ENCODE measurements at regions of chr6 and their contacts with region 1.

Region 1: DNA sequence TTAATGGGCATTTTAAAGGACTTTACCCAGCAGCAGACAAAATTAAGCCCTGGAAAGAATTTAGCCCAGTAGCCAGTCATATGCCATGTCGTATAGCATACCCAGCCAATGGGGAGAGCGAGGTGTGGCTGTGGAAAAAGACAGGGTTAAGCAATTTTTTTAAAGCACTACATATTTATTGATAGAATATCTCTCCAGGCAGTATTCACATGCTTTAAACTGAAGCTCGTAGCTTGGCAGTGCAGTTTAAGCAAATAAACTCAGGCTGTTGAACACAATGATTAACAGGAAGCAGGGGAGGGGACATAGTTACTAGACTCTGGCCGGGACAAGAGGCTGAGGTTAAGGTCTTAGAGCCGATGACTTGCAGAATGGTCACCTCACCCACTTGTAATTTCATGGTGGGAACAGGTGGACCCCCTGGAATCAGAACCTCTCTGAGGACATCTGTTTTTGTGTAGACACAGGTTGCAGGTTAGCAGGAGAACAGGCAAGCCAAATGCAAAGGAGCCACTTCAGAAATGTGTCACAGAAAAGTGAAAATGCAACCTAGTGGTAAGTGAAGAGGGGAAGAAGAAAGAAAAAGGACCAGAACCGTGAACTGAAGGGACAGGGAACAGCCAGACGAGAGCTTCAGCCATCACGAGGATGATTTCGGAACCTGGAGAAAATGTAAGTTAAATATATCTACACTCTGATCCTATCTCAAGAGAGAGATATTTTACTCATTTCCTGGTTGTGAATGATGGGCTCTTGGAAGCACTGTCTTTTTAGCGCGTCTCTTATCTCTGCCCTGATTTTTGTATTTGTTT is 7.2 kb downstream of the GCNT2 start:
- DNase-seq: no peak
- ATAC-seq: peak; percentile 57
- H3K4me3 Mint-ChIP-seq: peak overlapping the region; percentile 97
- H3K27ac Mint-ChIP-seq: peak overlapping the region; percentile 96
- H3K4me1 Mint-ChIP-seq: peaks cover 65% of the 10 kb centered on the region
- H3K27me3 Mint-ChIP-seq: no peaks in the 10 kb centered on the region
- CTCF ChIP-seq: no peak

Region 2: DNA sequence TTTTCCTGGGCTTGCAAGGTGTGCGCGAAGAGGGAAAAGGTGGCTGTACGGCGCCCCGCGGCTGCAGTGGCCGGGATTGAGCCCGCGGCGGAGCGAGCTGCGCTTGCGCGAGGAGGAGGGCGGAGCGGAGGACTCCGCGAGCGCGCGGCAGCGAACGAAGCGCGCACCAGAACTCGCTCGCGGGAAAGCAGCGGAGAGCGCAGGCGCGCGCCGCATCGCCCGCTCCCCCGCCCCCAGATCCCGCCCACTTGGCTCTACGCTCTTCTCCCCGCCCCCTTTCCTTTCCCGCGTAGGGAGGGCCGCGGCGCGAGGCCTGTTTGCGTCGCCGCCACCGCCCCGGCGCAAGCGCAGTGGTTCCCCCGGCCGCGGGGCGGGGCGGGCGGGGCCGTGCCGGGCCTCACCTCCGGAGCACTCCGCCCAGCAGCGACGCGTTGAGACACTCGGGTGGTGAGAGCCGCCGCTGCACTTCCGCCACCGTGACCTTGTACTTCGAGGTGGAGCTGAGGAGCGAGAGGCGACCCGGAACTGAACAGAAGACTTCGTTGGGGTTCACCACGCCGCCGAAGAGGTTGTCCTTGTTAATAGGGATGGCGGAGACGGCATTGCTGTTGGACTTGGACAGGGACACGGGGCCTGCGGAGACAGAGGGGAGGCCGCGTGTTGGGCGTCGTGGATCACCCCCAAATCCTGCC is 124.1 kb before region 1 on chr6:
- CTCF ChIA-PET with region 1: no interaction called
- POLR2A ChIA-PET with region 1: no interaction called
- intact Hi-C with region 1: loop called (anchors 5 kb)
- DNase-seq: peak; percentile 80
- ATAC-seq: peak; percentile 94
- H3K4me3 Mint-ChIP-seq: peak overlapping the region; percentile 78
- H3K27ac Mint-ChIP-seq: peak overlapping the region; percentile 63
- H3K4me1 Mint-ChIP-seq: peaks cover 12% of the 10 kb centered on the region
- H3K27me3 Mint-ChIP-seq: peaks cover 54% of the 10 kb centered on the region
- CTCF ChIP-seq: no peak

Region 3: GRCh38 chr6:10429638-10430427 is 98.5 kb before region 1 on chr6:
- CTCF ChIA-PET with region 1: no interaction called
- POLR2A ChIA-PET with region 1: no interaction called
- intact Hi-C with region 1: no loop called
- DNase-seq: no peak
- ATAC-seq: peak; percentile 18
- H3K4me3 Mint-ChIP-seq: peak overlapping the region; percentile 20
- H3K27ac Mint-ChIP-seq: no peak overlapping the region
- H3K4me1 Mint-ChIP-seq: peaks cover 22% of the 10 kb centered on the region
- H3K27me3 Mint-ChIP-seq: peaks cover 46% of the 10 kb centered on the region
- CTCF ChIP-seq: no peak

Region 4: DNA sequence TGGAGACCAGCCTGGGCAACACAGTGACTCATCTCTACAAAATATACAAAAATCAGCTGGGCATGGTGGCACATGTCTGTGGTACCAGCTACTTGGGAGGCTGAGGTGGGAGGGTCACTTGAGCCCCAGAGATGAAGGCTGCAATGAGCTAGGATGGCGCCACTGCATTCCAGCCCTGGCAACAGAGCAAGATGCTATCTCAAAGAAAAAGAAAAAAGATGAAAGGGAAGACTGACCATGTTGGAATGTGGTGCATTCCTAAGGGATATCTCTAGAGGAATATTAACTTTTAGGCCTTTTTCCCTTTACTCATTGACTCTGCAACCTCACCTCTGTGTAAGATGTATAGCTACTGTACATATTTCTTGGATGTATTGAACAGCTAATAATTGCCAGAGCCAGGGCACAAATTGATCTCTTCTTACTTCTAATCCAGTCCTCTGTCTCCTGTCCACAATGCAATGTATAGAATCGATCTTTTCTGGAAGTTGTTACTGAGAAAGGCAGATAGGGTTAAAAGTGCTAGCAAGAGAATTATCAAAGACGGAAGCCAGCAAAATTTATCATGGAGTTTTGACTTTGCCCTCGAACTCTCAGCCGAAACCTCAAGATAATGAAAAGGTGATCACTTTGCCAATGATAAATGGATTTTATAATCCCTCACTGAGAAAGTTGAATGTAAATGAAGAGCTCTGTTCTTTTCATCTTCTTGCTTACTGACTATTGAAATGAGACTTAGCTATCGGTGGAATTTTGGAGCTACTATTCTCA is 39.1 kb after region 1 on chr6:
- CTCF ChIA-PET with region 1: no interaction called
- POLR2A ChIA-PET with region 1: no interaction called
- intact Hi-C with region 1: no loop called
- DNase-seq: no peak
- ATAC-seq: no peak
- H3K4me3 Mint-ChIP-seq: no peak overlapping the region
- H3K27ac Mint-ChIP-seq: no peak overlapping the region
- H3K4me1 Mint-ChIP-seq: peaks cover 15% of the 10 kb centered on the region
- H3K27me3 Mint-ChIP-seq: no peaks in the 10 kb centered on the region
- CTCF ChIP-seq: no peak

Region 5: DNA sequence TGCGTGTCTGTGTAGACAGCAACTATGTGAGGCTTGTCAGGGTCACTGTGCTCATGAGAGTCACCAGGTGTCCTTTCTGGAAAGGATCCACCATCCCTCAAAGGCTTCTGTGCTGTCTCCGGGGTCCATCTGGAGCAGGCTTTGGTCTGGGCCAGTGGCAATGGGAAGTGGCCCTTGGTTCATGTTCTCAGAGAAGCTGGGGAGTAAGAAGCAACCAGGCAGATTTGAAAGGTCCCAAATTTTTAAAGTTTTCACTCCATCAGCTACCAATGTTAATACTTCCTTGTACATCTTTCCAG is 61.0 kb after region 1 on chr6:
- CTCF ChIA-PET with region 1: no interaction called
- POLR2A ChIA-PET with region 1: no interaction called
- intact Hi-C with region 1: no loop called
- DNase-seq: no peak
- ATAC-seq: no peak
- H3K4me3 Mint-ChIP-seq: no peak overlapping the region
- H3K27ac Mint-ChIP-seq: no peak overlapping the region
- H3K4me1 Mint-ChIP-seq: peaks cover 18% of the 10 kb centered on the region
- H3K27me3 Mint-ChIP-seq: no peaks in the 10 kb centered on the region
- CTCF ChIP-seq: no peak

Region 6: DNA sequence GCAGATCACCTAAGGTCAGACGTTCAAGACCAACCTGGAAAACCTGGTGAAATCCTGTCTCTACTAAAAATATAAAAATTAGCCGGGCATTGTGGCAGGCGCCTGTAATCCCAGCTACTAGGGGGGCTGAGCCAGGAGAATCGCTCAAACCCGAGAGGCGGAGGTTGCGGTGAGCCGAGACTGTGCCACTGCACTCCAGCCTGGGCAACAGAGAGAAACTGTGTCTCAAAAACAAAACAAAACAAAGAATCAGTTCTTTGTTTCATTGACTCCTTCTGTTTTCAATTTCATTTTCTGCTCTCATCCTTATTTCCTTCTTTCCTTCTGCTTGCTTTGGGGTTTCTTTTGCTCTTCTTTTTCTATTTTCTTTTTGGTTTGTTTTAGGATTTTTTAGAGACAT is 185.6 kb after region 1 on chr6:
- CTCF ChIA-PET with region 1: no interaction called
- POLR2A ChIA-PET with region 1: no interaction called
- intact Hi-C with region 1: no loop called
- DNase-seq: no peak
- ATAC-seq: no peak
- H3K4me3 Mint-ChIP-seq: no peak overlapping the region
- H3K27ac Mint-ChIP-seq: no peak overlapping the region
- H3K4me1 Mint-ChIP-seq: no peaks in the 10 kb centered on the region
- H3K27me3 Mint-ChIP-seq: no peaks in the 10 kb centered on the region
- CTCF ChIP-seq: no peak